ENCODE measurements at regions of chr18 and their contacts with region 1.

Region 1: GRCh38 chr18:49858309-49859020 is 45.1 kb upstream of the ACAA2 start:
- DNase-seq: peak; percentile 70
- ATAC-seq: peak; percentile 94
- H3K4me3 ChIP-seq: no peak overlapping the region
- H3K27ac ChIP-seq: no peak overlapping the region
- H3K4me1 ChIP-seq: no peaks in the 10 kb centered on the region
- H3K27me3 ChIP-seq: peaks cover 17% of the 10 kb centered on the region
- CTCF ChIP-seq: peak; percentile 99
- POLR2A ChIP-seq: peak; percentile 70
- RAD21 ChIP-seq: peak; percentile 100

Region 2: GRCh38 chr18:49555641-49556040 is 302.8 kb before region 1 on chr18:
- CTCF ChIA-PET with region 1: interaction called, 6 read pairs
- POLR2A ChIA-PET with region 1: no interaction called
- dilution Hi-C with region 1: no loop called
- in situ Hi-C with region 1: loop called (anchors 5 kb)
- intact Hi-C with region 1: loop called (anchors 1 kb)
- DNase-seq: no peak
- ATAC-seq: no peak
- H3K4me3 ChIP-seq: no peak overlapping the region
- H3K27ac ChIP-seq: no peak overlapping the region
- H3K4me1 ChIP-seq: no peaks in the 10 kb centered on the region
- H3K27me3 ChIP-seq: peaks cover 37% of the 10 kb centered on the region
- CTCF ChIP-seq: no peak
- POLR2A ChIP-seq: no peak
- RAD21 ChIP-seq: no peak

Region 3: GRCh38 chr18:49597157-49597931 is 261.1 kb before region 1 on chr18:
- CTCF ChIA-PET with region 1: no interaction called
- POLR2A ChIA-PET with region 1: no interaction called
- dilution Hi-C with region 1: no loop called
- in situ Hi-C with region 1: no loop called
- intact Hi-C with region 1: no loop called
- DNase-seq: no peak
- ATAC-seq: no peak
- H3K4me3 ChIP-seq: no peak overlapping the region
- H3K27ac ChIP-seq: no peak overlapping the region
- H3K4me1 ChIP-seq: no peaks in the 10 kb centered on the region
- H3K27me3 ChIP-seq: peaks cover 17% of the 10 kb centered on the region
- CTCF ChIP-seq: no peak
- POLR2A ChIP-seq: no peak
- RAD21 ChIP-seq: no peak

Region 4: DNA sequence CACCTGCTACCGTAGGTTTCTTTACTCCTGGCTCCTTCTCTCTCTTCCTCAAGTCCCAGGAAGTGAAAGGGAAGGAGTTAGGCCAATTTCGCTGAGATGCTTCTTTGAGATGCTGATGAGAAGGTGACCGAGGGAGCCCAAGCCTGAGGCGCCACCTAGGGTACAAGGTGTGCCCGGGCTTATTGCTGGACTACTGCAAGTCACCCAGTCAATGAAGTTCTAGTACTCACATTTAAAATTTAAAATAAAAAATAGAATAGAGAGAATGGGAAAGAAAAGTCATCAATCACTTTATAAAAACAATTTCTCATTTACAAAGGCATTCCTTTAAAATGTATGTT is 90.4 kb before region 1 on chr18:
- CTCF ChIA-PET with region 1: no interaction called
- POLR2A ChIA-PET with region 1: no interaction called
- dilution Hi-C with region 1: no loop called
- in situ Hi-C with region 1: no loop called
- intact Hi-C with region 1: loop called (anchors 5 kb)
- DNase-seq: peak; percentile 65
- ATAC-seq: 0 out of 2 replicates have a peak, but pooled peaks have one; percentile 52
- H3K4me3 ChIP-seq: no peak overlapping the region
- H3K27ac ChIP-seq: no peak overlapping the region
- H3K4me1 ChIP-seq: peaks cover 5% of the 10 kb centered on the region
- H3K27me3 ChIP-seq: peaks cover 4% of the 10 kb centered on the region
- CTCF ChIP-seq: peak; percentile 71
- POLR2A ChIP-seq: no peak
- RAD21 ChIP-seq: peak; percentile 84

Region 5: DNA sequence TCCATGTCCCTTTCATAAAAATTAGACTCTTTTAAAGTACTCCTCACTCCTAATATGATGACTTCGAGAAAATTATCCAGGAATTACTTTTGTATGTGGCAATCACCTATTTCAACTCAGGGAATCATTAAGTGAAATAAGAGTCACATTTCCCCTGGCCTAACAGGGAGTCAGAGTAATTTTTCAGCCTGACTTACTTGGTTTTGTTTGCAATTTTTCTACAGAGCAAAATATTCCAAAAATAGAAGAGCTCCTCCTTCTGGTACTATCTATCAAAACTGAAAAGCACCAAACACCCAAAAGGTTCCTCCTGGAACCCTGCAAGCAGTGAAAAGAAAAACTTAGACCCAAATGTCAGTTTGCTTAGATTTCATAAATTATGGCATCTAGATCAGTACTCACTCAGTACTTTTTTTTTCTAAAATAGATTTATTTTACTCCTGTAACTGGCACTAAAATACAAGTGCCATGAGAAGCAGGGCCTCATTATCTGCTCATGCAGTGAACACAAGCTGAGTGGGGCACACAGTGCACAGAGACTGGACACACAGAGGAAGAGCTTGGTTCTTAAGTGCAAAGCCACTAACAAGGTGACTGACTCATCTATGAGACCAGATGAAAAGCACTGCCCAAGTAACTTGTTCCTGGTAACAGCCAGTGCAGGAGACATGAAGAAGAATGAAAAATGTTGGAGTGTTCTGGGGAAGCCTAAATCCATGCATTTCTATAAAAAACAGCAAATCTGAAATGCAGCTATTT is 73.9 kb before region 1 on chr18:
- CTCF ChIA-PET with region 1: interaction called, 4 read pairs
- POLR2A ChIA-PET with region 1: no interaction called
- dilution Hi-C with region 1: no loop called
- in situ Hi-C with region 1: no loop called
- intact Hi-C with region 1: loop called (anchors 1 kb)
- DNase-seq: peak; percentile 18
- ATAC-seq: no peak
- H3K4me3 ChIP-seq: no peak overlapping the region
- H3K27ac ChIP-seq: no peak overlapping the region
- H3K4me1 ChIP-seq: no peaks in the 10 kb centered on the region; the same call in 1 of the 2 replicates
- H3K27me3 ChIP-seq: no peaks in the 10 kb centered on the region
- CTCF ChIP-seq: 0 out of 2 replicates have a peak, but pooled peaks have one; percentile 21
- POLR2A ChIP-seq: no peak
- RAD21 ChIP-seq: no peak

Region 6: DNA sequence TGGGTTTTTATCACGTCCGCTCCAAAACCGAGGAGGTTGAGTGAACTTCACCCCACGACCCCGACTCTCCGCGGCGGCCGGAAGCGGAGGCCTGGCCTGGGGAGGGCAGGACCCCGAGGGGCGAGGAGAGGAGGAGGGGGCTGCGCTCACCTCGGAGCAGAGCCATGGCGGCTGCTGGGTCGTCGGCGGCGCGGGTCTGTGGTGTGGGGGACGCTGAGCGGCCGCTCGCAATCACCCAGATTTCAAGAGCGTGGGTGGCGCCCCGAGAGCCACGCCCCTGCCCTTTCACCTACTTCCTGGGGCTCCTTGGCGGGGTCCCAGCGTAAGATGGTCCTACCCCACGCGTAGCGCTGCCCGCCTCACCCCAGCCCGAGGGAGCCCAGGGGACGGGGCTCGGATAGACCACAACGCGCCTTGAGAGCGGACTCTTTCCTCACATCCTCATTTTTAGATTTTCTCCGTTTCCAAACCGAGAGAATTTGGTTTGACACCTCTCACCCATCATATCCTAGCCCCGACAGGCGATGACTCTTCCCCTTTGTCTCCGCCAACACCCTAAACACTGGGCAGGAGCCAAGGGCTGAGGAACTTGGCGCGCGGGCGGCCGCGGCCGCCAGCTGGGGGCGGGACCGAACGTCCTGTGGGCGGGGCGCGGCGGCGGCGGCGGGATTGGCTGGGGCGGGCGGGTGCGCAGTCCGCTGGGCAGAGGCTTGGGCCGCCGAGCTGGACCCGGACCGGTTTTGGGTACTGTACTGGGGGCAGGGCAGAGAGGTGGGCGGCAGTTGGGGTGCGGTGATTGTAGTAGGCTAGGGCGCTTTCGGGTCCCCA is 44.9 kb before region 1 on chr18 and contains the start of gene ACAA2:
- CTCF ChIA-PET with region 1: no interaction called
- POLR2A ChIA-PET with region 1: no interaction called
- dilution Hi-C with region 1: no loop called
- in situ Hi-C with region 1: no loop called
- intact Hi-C with region 1: loop called (anchors 2 kb)
- DNase-seq: peak; percentile 83
- ATAC-seq: peak; percentile 94
- H3K4me3 ChIP-seq: peak within 1 kb of the TSS; percentile 69
- H3K27ac ChIP-seq: peak within 1 kb of the TSS; percentile 94
- H3K4me1 ChIP-seq: peaks cover 10% of the 10 kb centered on the region
- H3K27me3 ChIP-seq: no peaks in the 10 kb centered on the region
- CTCF ChIP-seq: no peak
- POLR2A ChIP-seq: peak; percentile 62
- RAD21 ChIP-seq: no peak
- total RNA-seq, gene ACAA2: 61.5 and 71.7 TPM in 2 replicates